ENCODE measurements at regions of chr11 and their contacts with region 1.

Region 1: DNA sequence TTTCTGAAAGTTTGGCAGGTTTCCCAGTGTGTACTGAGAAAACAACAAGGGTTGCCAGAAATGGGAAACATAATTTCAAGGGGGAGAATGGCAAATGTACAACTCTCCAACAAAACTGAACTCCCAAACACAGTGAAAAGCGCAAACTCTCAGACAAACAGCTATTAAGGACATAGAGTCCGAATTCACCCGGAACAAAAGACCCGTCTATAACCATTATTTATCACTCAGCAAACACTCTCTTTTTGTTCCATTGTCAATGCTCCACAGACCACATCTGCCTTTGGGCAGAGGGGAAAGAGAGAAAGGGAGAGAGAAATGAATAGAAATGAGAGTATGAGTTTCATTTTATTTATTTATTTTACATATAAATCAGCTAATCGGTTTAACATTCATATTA is 21.7 kb downstream of the KIRREL3 start:
- DNase-seq: no peak
- H3K4me3 ChIP-seq: peak overlapping the region in 8 of 59 donors; percentile 7 to 37 (median 22)
- H3K27ac ChIP-seq: peak overlapping the region; percentile 13 to 99 (median 95)
- H3K27me3 ChIP-seq: no peaks in the 10 kb centered on the region
- CTCF ChIP-seq: peak in 4 of 56 donors; percentile 8 to 41 (median 19)

Region 2: GRCh38 chr11:126808836-126809235 is 170.1 kb before region 1 on chr11:
- intact Hi-C with region 1: loop called in 1 of 2 experiments (anchors 5 kb)
- DNase-seq: peak in 2 of 10 donors; percentile 48 to 50
- H3K4me3 ChIP-seq: peak overlapping the region in 2 of 59 donors; percentile 7 to 14
- H3K27ac ChIP-seq: peak overlapping the region in 57 of 59 donors; percentile 26 to 91 (median 75)
- H3K27me3 ChIP-seq: no peaks in the 10 kb centered on the region
- CTCF ChIP-seq: no peak

Region 3: GRCh38 chr11:126891556-126892217 is 87.2 kb before region 1 on chr11:
- intact Hi-C with region 1: loop called (anchors 5 kb)
- DNase-seq: no peak
- H3K4me3 ChIP-seq: no peak overlapping the region
- H3K27ac ChIP-seq: peak overlapping the region in 58 of 59 donors; percentile 2 to 96 (median 82)
- H3K27me3 ChIP-seq: no peaks in the 10 kb centered on the region
- CTCF ChIP-seq: no peak

Region 4: DNA sequence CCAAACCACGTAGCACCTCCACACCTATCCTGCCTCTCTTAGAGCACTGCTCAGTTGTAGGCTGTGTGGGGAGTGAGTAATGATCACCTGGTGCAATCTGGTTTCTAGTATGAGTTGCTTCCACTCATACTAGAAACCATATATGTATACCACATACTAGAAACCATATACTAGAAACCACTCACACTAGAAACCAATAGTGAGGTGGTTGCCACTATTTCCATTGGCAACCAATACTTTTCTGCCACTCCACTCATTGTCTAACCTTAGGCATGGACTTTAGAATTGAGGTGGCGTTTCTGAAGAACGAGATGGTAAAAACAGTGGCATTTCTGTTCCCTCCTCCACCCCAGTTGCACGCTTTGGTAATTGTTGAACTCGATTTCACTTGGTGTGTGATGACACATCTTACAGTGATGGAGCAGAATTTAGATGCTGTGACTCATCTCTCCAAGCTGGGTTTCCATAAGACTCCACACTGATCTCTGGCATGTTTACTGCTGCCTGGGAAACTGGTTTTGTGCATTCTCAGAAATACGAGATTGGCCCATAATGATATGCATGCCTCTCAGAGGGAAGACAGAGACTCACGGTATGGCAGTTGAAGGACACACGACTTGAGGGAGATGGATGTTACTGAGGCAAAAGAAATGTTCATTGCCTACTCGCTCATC is 61.2 kb before region 1 on chr11:
- intact Hi-C with region 1: no loop called
- DNase-seq: peak in 2 of 10 donors; percentile 22 to 38
- H3K4me3 ChIP-seq: no peak overlapping the region
- H3K27ac ChIP-seq: peak overlapping the region in 29 of 59 donors; percentile 1 to 90 (median 39)
- H3K27me3 ChIP-seq: no peaks in the 10 kb centered on the region
- CTCF ChIP-seq: no peak

Measured in dorsolateral prefrontal cortex (tissue), 120 donors.